ENCODE measurements at regions of chr5 and their contacts with region 1.

Region 1: DNA sequence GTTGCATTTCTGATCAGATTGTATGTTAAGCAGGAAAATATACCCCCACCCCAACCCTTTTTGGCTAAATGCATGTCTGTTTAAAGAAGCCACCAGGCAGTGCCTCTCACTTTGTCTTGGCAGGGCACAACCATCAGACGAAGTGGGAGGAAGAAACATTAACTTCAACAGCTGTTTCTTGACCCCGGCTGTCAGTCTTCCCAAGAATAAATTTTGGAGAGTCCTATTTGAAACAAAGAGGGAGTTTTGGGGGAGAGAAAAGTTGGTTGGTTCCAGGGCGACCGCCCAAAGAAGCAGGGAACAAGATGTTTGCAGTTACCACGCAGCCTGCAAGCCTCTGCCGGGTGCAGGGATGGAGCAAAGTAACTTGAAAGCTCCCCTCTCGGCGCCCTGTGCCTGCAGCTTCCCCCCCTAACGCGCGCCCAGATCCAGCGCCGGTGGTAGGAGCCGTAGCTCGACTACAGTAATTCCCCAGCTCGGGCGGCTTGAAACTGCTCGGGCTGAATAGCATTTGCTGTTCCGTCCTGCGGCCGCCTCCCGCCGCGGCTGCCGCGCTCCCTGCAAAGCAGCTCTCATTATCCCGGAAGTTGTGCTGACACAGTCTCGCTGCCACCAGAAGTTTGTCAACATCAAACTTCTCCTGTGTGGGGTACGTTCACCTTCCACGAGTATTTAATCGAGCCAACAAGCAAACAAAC is 100.7 kb upstream of the SSBP2 start:
- DNase-seq: peak; percentile 89 to 97
- ATAC-seq: peak; percentile 83 to 87
- H3K4me3 ChIP-seq: peak overlapping the region; percentile 49 to 63 (median 55)
- H3K27ac ChIP-seq: peak overlapping the region; percentile 83 to 96 (median 92)
- H3K4me1 ChIP-seq: peaks cover 78 to 82% of the 10 kb centered on the region in 2 donors
- H3K27me3 ChIP-seq: no peaks in the 10 kb centered on the region
- CTCF ChIP-seq: peak in 1 of 5 experiments; percentile 15
- POLR2A ChIP-seq: peak in 1 of 2 donors; percentile 29

Region 2: DNA sequence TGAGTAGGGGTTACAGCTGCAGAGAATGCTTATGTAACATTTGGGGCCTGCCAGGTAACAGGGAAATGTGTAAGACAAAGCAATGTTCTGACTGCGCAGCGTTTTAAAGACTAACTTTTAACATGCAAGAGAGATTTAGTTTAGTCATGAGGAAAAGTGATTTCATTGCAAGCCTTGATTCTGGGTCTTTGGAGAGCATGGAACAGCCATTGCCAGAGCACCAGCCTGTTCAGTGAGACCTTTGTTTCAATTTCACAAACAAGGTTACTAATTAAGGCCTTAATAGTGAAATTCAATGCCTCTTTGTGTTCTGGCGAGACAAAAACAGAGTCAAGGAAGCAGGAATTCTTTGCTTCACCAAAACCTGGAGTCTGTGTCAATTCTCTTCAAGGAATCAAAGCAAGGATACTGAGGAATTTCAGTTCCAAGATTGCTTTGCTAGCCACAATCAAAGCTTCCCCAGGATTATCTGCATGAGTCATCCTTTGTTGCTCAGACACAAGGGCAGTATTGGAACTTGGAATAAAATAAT is 604.1 kb before region 1 on chr5:
- in situ Hi-C with region 1: no loop called
- intact Hi-C with region 1: loop called (anchors 5 kb)
- DNase-seq: no peak
- ATAC-seq: no peak
- H3K4me3 ChIP-seq: no peak overlapping the region
- H3K27ac ChIP-seq: peak overlapping the region; percentile 98 to 100 (median 98)
- H3K4me1 ChIP-seq: peaks cover 92 to 95% of the 10 kb centered on the region in 2 donors
- H3K27me3 ChIP-seq: no peaks in the 10 kb centered on the region
- CTCF ChIP-seq: no peak
- POLR2A ChIP-seq: no peak

Region 3: GRCh38 chr5:81425569-81425968 is 426.1 kb before region 1 on chr5:
- in situ Hi-C with region 1: no loop called
- intact Hi-C with region 1: loop called (anchors 5 kb)
- DNase-seq: no peak
- ATAC-seq: peak; percentile 24 to 48
- H3K4me3 ChIP-seq: no peak overlapping the region
- H3K27ac ChIP-seq: peak overlapping the region; percentile 27 to 55 (median 44)
- H3K4me1 ChIP-seq: peaks cover 37 to 56% of the 10 kb centered on the region in 2 donors
- H3K27me3 ChIP-seq: no peaks in the 10 kb centered on the region
- CTCF ChIP-seq: peak; percentile 47 to 73 (median 62)
- POLR2A ChIP-seq: no peak

Region 4: GRCh38 chr5:81751009-81751835 is 100.4 kb before region 1 on chr5 and contains the start of gene SSBP2:
- in situ Hi-C with region 1: loop called (anchors 5 to 10 kb)
- intact Hi-C with region 1: loop called (anchors 1 kb)
- DNase-seq: peak; percentile 98 to 100
- ATAC-seq: peak; percentile 76 to 81
- H3K4me3 ChIP-seq: peak within 1 kb of the TSS; percentile 81 to 84 (median 82)
- H3K27ac ChIP-seq: peak within 1 kb of the TSS; percentile 86 to 99 (median 98)
- H3K4me1 ChIP-seq: peaks cover 41 to 59% of the 10 kb centered on the region in 2 donors
- H3K27me3 ChIP-seq: no peaks in the 10 kb centered on the region
- CTCF ChIP-seq: peak in 1 of 5 experiments; percentile 30
- POLR2A ChIP-seq: peak; percentile 68 to 84
- total RNA-seq, gene SSBP2: 30.4 to 66.5 (median 40.5) TPM

Region 5: GRCh38 chr5:81787474-81788242 is 64.0 kb before region 1 on chr5:
- in situ Hi-C with region 1: loop called in 3 of 4 experiments (anchors 5 kb)
- intact Hi-C with region 1: loop called (anchors 1 kb)
- DNase-seq: peak; percentile 63 to 68
- ATAC-seq: peak; percentile 49 to 70
- H3K4me3 ChIP-seq: peak overlapping the region in 3 of 4 donors; percentile 11 to 27 (median 14)
- H3K27ac ChIP-seq: peak overlapping the region; percentile 55 to 64 (median 58)
- H3K4me1 ChIP-seq: peaks cover 34 to 38% of the 10 kb centered on the region in 2 donors
- H3K27me3 ChIP-seq: no peaks in the 10 kb centered on the region
- CTCF ChIP-seq: no peak
- POLR2A ChIP-seq: no peak

Region 6: DNA sequence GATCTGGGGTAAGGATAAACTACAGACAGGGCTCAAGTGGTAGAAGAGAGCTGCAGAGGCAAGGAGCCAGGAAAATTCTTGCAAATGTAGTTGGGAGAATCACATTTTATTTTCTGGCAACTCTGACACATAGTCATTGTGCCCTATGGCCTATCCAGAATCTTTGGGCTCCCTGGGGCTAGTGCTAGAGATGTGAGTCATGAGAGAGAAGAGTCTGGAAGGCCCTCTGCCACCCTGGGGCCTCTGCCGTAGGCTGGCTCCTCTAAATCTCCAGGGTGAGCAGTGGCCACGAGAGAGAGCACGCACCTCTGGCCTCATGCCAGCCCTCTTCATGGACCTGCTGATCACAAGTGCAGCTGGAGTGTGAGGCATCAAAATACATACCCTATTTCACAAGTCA is 26.4 kb before region 1 on chr5:
- in situ Hi-C with region 1: no loop called
- intact Hi-C with region 1: no loop called
- DNase-seq: peak; percentile 47 to 69
- ATAC-seq: peak; percentile 60 to 67
- H3K4me3 ChIP-seq: no peak overlapping the region
- H3K27ac ChIP-seq: peak overlapping the region in 2 of 4 donors; percentile 13 to 42
- H3K4me1 ChIP-seq: peaks cover 8 to 16% of the 10 kb centered on the region in 2 donors
- H3K27me3 ChIP-seq: no peaks in the 10 kb centered on the region
- CTCF ChIP-seq: no peak
- POLR2A ChIP-seq: no peak

Region 7: DNA sequence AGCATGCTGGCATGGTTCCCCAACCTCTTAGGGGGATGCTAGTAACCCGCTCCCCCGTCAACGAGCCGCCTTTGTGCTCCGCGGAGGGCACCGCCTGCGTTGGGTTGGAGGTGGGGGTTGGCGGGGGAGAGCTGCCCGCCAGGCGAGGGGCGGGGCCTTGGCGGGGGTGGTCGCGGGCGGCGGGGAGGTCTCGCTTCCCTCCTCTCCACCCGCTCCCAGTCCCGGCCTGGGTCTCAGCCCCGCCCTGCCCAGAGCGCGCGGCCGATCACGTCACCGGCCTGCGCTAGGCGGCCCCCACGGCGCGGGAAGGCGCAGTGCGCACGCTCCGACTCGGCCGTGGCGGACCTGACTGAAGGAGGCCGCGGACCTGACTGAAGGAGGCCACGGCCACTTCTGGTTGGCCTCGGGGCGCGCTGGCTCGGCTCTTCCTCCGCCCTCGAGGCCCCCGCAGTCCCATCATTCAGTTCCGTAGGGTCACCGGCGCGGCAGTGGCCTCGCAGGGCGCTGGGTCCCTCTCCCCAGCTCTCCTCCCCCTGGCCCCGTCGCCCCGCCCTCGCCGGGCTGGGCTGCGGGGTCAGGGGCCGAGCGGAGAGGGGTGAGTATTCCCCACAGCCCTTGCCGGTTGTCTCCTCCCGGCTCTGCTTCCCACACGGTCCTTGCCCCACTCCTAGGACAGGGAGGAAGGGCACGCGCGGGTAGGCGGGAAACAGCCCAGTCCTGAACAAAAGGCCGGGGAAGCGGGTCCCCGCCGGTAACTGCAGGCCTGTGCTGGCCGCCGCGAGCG is 120.3 kb after region 1 on chr5 and contains the start of gene ATG10:
- in situ Hi-C with region 1: no loop called
- intact Hi-C with region 1: loop called (anchors 2 kb)
- DNase-seq: peak; percentile 79 to 87
- ATAC-seq: peak; percentile 94 to 96
- H3K4me3 ChIP-seq: peak within 1 kb of the TSS; percentile 79 to 93 (median 82)
- H3K27ac ChIP-seq: peak within 1 kb of the TSS; percentile 93 to 99 (median 98)
- H3K4me1 ChIP-seq: peaks cover 0 to 8% of the 10 kb centered on the region in 2 donors
- H3K27me3 ChIP-seq: no peaks in the 10 kb centered on the region
- CTCF ChIP-seq: peak in 1 of 5 experiments; percentile 9
- POLR2A ChIP-seq: peak; percentile 95 to 97
- total RNA-seq, gene ATG10: 2.9 to 8.5 (median 6.0) TPM

Region 8: DNA sequence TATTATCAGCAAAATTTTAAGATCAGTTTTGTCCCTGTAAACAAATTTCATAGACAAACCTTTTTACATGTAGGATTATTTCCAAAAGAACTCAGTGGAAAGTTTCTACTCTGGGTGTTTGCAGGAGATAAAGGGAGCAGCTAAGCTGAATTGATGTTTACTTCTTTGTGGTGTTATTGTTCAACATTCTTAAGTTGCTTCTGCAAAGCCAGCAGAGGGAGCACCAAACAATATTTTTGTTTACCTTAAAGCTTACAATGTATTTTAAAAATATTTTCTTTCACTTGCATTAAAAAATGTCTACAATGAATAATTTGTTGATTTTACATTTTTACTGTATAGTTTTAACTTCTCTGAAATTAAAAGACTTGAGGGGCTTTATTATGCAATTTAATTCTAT is 255.6 kb after region 1 on chr5:
- in situ Hi-C with region 1: no loop called
- intact Hi-C with region 1: no loop called
- DNase-seq: no peak
- ATAC-seq: peak; percentile 74 to 79
- H3K4me3 ChIP-seq: no peak overlapping the region
- H3K27ac ChIP-seq: no peak overlapping the region
- H3K4me1 ChIP-seq: peaks cover 7 to 18% of the 10 kb centered on the region in 2 donors
- H3K27me3 ChIP-seq: no peaks in the 10 kb centered on the region
- CTCF ChIP-seq: peak; percentile 38 to 56 (median 54)
- POLR2A ChIP-seq: no peak

Measured in gastrocnemius medialis (tissue), 4 donors.